RWPE1 (cell line): ENCODE measurements at regions of chr10 and their contacts with region 1.

Region 1: DNA sequence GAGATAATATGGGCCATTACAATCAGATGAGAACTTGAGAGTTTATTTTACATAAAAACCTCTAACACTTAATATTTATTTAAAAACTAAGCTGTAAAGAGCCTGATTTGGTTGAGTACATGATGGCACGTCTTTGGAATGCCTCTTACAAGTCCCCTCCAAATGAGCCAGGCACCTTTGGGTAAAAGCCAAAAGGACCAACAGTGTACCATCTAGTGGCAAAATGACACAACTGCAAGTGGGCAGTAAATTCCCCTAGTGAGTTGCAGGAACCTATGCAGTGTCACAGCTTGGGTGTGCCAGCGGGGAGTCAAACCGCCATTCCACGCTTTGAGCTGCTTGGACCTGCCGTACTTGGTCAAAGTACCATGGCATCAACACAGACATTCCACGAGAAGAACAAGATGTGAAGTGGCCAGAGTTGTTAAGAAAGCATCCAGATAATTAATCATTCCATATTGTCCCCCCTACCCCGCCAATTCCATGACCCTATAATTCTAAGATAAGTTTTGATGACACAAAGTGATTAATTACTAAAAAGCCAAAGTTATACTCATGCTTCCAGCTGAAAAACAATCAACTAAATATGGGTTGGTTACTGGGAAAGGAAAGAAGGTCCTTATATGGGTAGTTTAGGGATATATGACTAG is 115.2 kb downstream of the SORBS1 start:
- DNase-seq: peak; percentile 87
- H3K27ac ChIP-seq: no peak overlapping the region
- CTCF ChIP-seq: peak; percentile 80

Region 2: DNA sequence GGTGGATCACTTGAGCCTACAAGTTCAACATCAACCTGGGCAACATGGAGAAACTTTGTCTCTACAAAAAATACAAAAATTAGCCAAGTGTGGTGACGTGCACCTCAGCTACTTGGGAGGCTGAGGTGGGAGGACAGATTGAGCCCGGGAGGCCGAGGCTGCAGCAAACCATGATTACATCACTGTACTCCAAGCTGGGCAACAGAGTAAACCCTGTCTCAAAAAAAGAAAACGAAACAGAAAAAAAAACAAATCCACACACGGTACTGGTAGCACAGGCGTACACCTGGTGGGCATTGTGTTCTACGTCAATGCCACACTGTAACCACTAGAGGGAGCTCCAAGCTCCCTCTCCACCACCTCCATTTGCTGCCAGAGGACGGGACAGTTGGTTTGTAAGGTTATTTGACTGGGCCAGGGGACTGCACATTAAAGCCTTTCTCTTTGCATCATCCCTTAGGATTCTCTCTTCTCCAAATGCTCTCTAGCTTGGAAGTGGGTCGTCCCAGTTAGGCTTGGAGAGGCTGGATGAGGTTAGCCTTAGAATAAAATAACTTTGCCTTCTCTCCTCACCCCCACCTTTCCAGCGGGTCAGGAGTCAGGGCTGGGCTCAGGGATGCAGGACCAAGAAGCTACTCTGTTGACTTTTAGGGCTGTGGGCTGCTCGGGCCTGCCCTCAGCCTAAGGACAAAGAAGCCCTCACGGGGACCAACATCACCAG is 15.6 kb before region 1 on chr10:
- CTCF ChIA-PET with region 1: interaction called, 21 read pairs
- POLR2A ChIA-PET with region 1: no interaction called
- DNase-seq: peak; percentile 76
- H3K27ac ChIP-seq: no peak overlapping the region
- CTCF ChIP-seq: peak; percentile 93

Region 3: GRCh38 chr10:95456516-95456915 is 10.6 kb after region 1 on chr10:
- CTCF ChIA-PET with region 1: interaction called, 16 read pairs
- POLR2A ChIA-PET with region 1: no interaction called
- DNase-seq: peak; percentile 26
- H3K27ac ChIP-seq: no peak overlapping the region
- CTCF ChIP-seq: no peak

Region 4: GRCh38 chr10:95508730-95509129 is 62.8 kb after region 1 on chr10:
- CTCF ChIA-PET with region 1: no interaction called
- POLR2A ChIA-PET with region 1: no interaction called
- DNase-seq: no peak
- H3K27ac ChIP-seq: no peak overlapping the region
- CTCF ChIP-seq: no peak